MCF 10A (cell line): ENCODE measurements at regions of chr5 and their contacts with region 1.

Region 1: DNA sequence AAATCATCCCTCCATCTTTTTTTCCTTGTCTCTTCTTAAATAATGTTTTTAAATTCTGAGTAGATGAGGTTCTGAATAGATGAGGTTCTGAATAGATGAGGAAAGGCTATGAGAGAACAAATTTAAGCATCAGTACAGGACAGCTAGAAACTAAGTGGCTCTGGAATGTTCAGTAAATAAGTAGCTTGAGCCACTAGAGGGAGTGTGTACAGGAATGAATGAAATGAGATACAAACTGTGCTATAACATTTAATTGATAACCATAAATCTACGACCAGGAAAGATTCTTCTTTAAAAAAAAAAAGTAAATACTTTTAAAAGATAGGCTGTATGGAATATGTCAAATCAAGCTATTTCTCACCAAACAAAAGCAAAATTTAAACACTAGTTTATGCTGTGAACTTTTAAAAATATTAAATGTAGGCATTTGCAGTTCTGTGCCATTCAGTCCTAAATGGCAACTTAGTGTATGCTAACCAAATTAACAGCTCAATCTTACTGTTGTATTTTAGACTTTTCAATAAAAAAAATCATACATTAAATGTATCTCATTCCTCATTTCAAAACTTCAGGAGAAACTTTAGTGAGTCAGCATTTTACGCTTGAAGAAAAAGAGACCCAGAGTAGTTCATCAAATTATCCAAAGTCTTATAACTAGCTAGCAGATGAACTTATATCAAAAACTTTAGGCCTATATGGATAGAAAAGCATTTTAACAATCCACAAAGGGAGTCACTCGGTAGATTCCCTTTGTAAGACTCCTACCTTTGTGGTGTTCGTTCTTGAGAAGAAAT is 70.4 kb upstream of the SNX2 start:
- DNase-seq: peak; percentile 69
- H3K4me3 Mint-ChIP-seq: no peak overlapping the region
- H3K27ac Mint-ChIP-seq: no peak overlapping the region
- H3K4me1 Mint-ChIP-seq: no peaks in the 10 kb centered on the region
- H3K27me3 Mint-ChIP-seq: no peaks in the 10 kb centered on the region
- CTCF ChIP-seq: peak; percentile 61

Region 2: DNA sequence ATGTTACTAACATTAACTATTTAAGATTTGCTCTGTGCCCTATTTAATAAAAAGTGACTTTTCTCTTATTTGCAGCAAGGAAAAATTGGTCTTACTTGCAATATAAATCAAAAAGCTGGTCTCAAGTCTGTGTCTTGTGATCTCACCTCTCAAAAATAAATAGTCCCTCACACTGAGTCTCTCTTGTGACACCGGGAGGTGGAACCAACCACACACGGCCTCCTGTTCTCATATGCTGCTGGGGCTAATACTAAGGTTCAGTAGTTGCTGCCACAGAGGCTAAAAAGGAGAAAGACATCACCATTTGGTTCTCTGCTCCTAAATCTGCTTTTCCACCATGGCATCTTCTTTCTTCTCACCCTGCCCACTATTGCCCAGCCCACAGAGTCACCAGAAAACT is 1028.5 kb before region 1 on chr5:
- CTCF ChIA-PET with region 1: no interaction called
- POLR2A ChIA-PET with region 1: no interaction called
- intact Hi-C with region 1: no loop called
- DNase-seq: no peak
- H3K4me3 Mint-ChIP-seq: no peak overlapping the region
- H3K27ac Mint-ChIP-seq: no peak overlapping the region
- H3K4me1 Mint-ChIP-seq: no peaks in the 10 kb centered on the region
- H3K27me3 Mint-ChIP-seq: no peaks in the 10 kb centered on the region
- CTCF ChIP-seq: no peak

Region 3: DNA sequence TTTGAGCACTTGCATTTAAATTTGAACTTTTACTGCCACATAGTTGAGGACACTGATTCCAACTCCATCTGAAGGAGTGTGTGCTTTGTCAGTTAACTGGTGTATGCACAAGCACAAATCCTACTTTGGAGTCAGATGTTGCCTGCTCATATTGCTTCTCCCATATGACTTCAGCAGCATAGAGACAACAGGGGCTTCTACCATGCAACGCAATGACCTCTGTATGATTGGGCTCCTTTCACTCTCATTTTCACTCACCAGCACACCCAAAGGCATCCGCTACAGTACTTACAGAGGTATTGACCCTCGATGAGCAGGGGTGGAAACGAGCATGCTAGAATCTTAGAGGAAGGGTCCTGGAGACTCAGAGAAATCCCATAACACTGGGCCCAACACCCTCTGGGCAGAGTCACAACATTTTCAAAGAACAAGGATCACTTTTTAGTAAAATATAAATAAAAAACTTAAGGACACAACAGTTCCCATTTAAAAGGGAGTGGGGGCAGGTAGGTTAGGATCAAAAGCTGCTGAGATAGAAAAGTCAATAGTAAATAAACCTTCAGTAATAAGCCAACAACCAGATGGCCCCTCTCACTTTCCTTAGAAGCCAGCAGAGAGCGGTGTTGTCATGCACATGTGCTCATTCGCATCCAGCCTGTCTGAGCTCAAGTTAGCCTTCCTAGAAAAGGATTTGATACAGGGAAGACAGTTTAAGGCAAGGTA is 188.6 kb before region 1 on chr5:
- CTCF ChIA-PET with region 1: interaction called, 25 read pairs
- POLR2A ChIA-PET with region 1: no interaction called
- intact Hi-C with region 1: no loop called
- DNase-seq: peak; percentile 89
- H3K4me3 Mint-ChIP-seq: no peak overlapping the region
- H3K27ac Mint-ChIP-seq: no peak overlapping the region
- H3K4me1 Mint-ChIP-seq: no peaks in the 10 kb centered on the region
- H3K27me3 Mint-ChIP-seq: no peaks in the 10 kb centered on the region
- CTCF ChIP-seq: peak; percentile 94

Region 4: GRCh38 chr5:122723606-122724352 is 19.3 kb after region 1 on chr5:
- CTCF ChIA-PET with region 1: interaction called, 17 read pairs
- POLR2A ChIA-PET with region 1: no interaction called
- intact Hi-C with region 1: no loop called
- DNase-seq: peak; percentile 46
- H3K4me3 Mint-ChIP-seq: no peak overlapping the region
- H3K27ac Mint-ChIP-seq: peak overlapping the region; percentile 1
- H3K4me1 Mint-ChIP-seq: peaks cover 12% of the 10 kb centered on the region
- H3K27me3 Mint-ChIP-seq: no peaks in the 10 kb centered on the region
- CTCF ChIP-seq: no peak

Region 5: GRCh38 chr5:122774861-122775549 is 70.6 kb after region 1 on chr5 and contains the start of gene SNX2:
- CTCF ChIA-PET with region 1: interaction called, 21 read pairs
- POLR2A ChIA-PET with region 1: interaction called, 18 read pairs
- intact Hi-C with region 1: loop called (anchors 1 kb)
- DNase-seq: peak; percentile 92
- H3K4me3 Mint-ChIP-seq: peak within 1 kb of the TSS; percentile 94
- H3K27ac Mint-ChIP-seq: peak within 1 kb of the TSS; percentile 95
- H3K4me1 Mint-ChIP-seq: peaks cover 30% of the 10 kb centered on the region
- H3K27me3 Mint-ChIP-seq: no peaks in the 10 kb centered on the region
- CTCF ChIP-seq: peak; percentile 32
- total RNA-seq, gene SNX2: 94.9 and 120 TPM in 2 replicates

Region 6: GRCh38 chr5:122882837-122883236 is 178.4 kb after region 1 on chr5:
- CTCF ChIA-PET with region 1: interaction called, 9 read pairs
- POLR2A ChIA-PET with region 1: no interaction called
- intact Hi-C with region 1: loop called (anchors 10 kb)
- DNase-seq: peak; percentile 39
- H3K4me3 Mint-ChIP-seq: peak overlapping the region; percentile 2
- H3K27ac Mint-ChIP-seq: peak overlapping the region; percentile 8
- H3K4me1 Mint-ChIP-seq: peaks cover 24% of the 10 kb centered on the region
- H3K27me3 Mint-ChIP-seq: no peaks in the 10 kb centered on the region
- CTCF ChIP-seq: no peak

Region 7: GRCh38 chr5:123157791-123158581 is 453.5 kb after region 1 on chr5:
- CTCF ChIA-PET with region 1: interaction called, 16 read pairs
- POLR2A ChIA-PET with region 1: no interaction called
- intact Hi-C with region 1: no loop called
- DNase-seq: peak; percentile 82
- H3K4me3 Mint-ChIP-seq: peak overlapping the region; percentile 47
- H3K27ac Mint-ChIP-seq: peak overlapping the region; percentile 68
- H3K4me1 Mint-ChIP-seq: peaks cover 20% of the 10 kb centered on the region
- H3K27me3 Mint-ChIP-seq: no peaks in the 10 kb centered on the region
- CTCF ChIP-seq: no peak

Region 8: DNA sequence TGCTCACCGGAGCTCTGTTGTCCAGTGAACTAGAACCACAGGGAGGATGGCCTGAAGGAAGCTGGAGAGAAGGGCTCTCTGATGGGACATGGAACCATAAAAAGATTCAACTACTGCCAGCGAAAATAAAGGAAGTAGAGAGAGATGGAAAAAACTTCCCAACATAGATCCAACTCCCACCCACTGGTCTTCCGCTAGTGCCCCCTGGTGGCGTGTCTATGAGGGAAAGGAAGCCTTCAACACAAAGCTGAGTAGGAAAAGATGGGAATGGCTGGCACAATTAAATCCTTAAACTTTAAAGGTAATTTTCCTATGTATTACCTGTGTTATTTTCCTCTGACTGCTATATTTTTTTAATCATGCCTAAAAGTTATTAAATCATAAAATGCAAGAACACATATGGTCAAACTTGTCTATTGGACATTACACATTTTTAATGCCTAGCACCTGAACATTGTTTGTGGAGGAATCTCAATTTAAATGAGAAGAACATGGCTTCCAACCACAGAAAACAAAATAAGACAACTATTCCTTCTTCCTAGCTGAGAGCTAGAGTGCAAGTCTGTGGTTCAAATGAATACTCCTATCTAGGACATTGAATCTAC is 667.2 kb after region 1 on chr5:
- CTCF ChIA-PET with region 1: interaction called, 9 read pairs
- POLR2A ChIA-PET with region 1: no interaction called
- intact Hi-C with region 1: loop called (anchors 10 kb)
- DNase-seq: peak; percentile 72
- H3K4me3 Mint-ChIP-seq: no peak overlapping the region
- H3K27ac Mint-ChIP-seq: no peak overlapping the region
- H3K4me1 Mint-ChIP-seq: no peaks in the 10 kb centered on the region
- H3K27me3 Mint-ChIP-seq: no peaks in the 10 kb centered on the region
- CTCF ChIP-seq: peak; percentile 49